Posterior vena cava (tissue), 2 donors: ENCODE measurements at regions of chr7 and their contacts with region 1.

Region 1: GRCh38 chr7:2043316-2044039 is 189.3 kb downstream of the MAD1L1 start:
- DNase-seq: peak; percentile 67

Region 2: GRCh38 chr7:2002561-2003450 is 40.7 kb before region 1 on chr7:
- intact Hi-C with region 1: loop called in 1 of 2 experiments (anchors 2 kb)
- DNase-seq: peak; percentile 66

Region 3: DNA sequence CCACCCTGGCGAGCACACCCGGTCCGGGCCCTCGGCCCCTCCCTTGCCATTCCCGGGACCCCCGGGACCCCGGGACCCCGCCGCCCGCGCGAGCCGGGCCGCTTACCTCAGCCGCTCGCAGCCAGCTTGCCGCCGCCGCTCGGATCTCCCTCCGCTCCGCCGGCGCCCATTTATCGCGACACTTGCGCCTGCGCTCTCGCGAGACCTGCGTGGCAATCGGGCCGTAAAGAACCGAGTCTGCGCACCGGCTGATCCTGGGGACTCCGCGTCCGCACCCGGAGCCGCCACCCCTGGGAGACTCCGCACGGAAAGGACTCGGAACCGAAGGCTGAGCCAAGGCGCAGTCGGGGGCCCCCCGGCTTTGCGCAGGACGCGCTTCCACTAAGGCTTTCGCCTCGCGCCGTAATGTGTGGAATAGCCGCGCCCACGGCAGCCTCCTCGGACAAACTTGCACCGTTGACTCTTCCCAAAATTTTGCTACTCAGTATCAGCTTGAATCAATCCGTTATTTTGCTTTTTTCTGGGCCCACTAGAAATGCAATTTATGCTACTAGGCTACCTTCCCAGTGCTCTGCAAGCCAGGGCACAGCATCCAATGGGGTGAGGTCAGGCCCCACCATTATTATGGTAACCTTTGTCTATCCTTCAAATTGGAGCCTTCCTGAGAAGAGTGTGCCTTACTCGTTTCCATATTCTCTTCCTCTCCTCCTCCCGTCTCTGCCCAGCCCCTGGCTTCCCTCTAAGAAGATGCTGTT is 189.5 kb after region 1 on chr7 and contains the start of gene MAD1L1:
- intact Hi-C with region 1: no loop called
- DNase-seq: peak; percentile 98
- total RNA-seq, gene MAD1L1: 17.3 to 24.7 TPM